ENCODE measurements at regions of chr16 and their contacts with region 1.

Region 1: DNA sequence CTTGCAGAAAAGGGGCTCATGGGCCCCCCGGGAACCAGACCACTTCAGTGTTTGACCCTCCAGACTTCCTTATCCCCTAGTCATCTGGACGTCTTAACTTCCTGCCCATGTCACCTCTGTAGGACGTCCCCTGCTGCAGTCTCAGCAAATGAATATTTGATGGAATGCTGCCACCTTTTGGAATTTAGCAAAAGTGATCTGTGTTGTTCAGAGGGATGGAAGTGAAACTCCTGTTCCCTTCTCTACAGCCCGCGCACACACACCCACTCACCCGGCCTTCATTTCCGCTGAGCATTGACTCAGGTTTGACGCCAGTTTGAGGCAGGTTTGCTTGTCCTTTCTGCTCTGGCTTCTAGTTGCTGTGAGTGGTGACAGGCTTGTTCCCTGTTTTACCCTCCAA is 507.2 kb upstream of the EEF2KMT start:
- DNase-seq: peak; percentile 80
- H3K4me3 ChIP-seq: no peak overlapping the region
- H3K27ac ChIP-seq: no peak overlapping the region
- H3K4me1 ChIP-seq: no peaks in the 10 kb centered on the region
- H3K27me3 ChIP-seq: no peaks in the 10 kb centered on the region
- CTCF ChIP-seq: peak; percentile 54

Region 2: GRCh38 chr16:5234295-5235050 is 370.3 kb before region 1 on chr16:
- CTCF ChIA-PET with region 1: no interaction called
- POLR2A ChIA-PET with region 1: no interaction called
- intact Hi-C with region 1: loop called (anchors 10 kb)
- DNase-seq: no peak
- H3K4me3 ChIP-seq: no peak overlapping the region
- H3K27ac ChIP-seq: no peak overlapping the region
- H3K4me1 ChIP-seq: no peaks in the 10 kb centered on the region
- H3K27me3 ChIP-seq: peaks cover 39% of the 10 kb centered on the region
- CTCF ChIP-seq: no peak

Region 3: GRCh38 chr16:5296176-5296575 is 308.6 kb before region 1 on chr16:
- CTCF ChIA-PET with region 1: no interaction called
- POLR2A ChIA-PET with region 1: no interaction called
- intact Hi-C with region 1: no loop called
- DNase-seq: no peak
- H3K4me3 ChIP-seq: no peak overlapping the region
- H3K27ac ChIP-seq: no peak overlapping the region
- H3K4me1 ChIP-seq: no peaks in the 10 kb centered on the region
- H3K27me3 ChIP-seq: no peaks in the 10 kb centered on the region
- CTCF ChIP-seq: no peak

Region 4: DNA sequence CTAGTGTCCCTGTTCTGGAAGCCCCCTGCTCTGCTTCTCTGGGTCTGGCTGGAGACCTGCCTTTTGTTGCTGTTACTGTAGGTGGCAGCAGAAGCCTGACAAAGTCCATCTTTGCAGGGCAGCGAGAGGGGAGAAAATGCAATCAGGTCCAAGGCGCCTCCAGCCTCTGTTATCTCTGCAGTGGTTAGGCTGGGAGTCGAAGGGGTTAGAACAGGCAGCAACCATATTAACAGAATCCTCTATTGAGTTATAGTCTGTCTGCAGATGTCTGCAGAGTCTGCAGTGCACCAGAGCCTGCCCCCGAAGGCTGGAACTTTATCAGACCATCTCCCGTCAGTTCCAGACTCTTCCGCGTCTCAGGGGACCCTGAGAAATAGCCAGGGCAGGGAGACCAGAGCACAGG is 102.3 kb before region 1 on chr16:
- CTCF ChIA-PET with region 1: no interaction called
- POLR2A ChIA-PET with region 1: no interaction called
- intact Hi-C with region 1: loop called (anchors 1 kb)
- DNase-seq: peak; percentile 70
- H3K4me3 ChIP-seq: no peak overlapping the region
- H3K27ac ChIP-seq: no peak overlapping the region
- H3K4me1 ChIP-seq: peaks cover 13% of the 10 kb centered on the region
- H3K27me3 ChIP-seq: no peaks in the 10 kb centered on the region
- CTCF ChIP-seq: peak; percentile 65

Measured in A673 (cell line).